ENCODE measurements at regions of chr1 and their contacts with region 1.

Region 1: DNA sequence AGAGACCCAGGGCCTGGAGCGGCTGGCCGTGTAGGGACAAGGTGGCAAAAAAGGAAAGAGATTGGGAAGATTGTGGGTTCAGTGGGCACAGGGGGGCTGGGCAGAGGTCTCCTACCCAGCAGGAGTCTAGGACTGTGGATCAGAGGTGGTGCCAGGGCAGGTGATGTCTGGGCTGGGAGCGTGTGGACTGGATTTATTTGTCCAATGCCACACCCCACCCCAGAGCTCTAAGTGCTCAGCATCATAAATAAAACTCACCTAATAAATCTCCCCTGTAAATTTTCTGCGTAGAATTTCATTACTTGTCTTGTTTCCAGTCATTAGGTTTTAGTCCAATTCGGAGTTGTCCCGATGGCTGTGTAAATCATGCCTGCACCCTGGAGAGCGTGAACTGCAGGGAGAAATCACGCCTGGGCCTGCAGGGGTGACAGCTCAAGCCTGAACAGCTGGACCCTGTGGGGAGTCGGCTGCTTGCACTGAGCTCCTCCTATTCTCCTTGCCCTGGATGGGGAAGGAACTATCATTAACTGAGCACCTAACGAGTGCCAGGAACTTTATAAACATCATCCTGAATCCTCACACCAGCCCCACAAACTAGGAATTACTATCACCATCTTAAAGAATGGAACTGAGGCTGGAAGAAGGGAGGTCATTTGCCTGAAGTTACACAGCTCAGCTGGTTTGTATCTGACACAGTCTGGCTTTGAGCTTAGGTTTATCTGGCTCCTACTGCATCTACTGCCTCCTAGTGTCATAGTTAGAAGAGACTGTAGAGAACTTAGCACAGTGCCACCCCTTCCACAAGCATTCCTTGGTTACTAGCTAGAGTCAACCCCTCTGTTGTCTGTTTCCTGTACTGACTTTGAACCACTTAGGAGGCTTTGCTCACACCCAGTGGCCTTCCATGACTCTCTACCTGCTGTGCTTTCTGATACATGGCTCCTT is 25.0 kb upstream of the POU3F1 start:
- DNase-seq: no peak
- H3K4me3 ChIP-seq: no peak overlapping the region
- H3K27ac ChIP-seq: no peak overlapping the region
- H3K4me1 ChIP-seq: peaks cover 4 to 20% (median 15%) of the 10 kb centered on the region in 4 experiments
- H3K27me3 ChIP-seq: no peaks in the 10 kb centered on the region
- CTCF ChIP-seq: peak in 2 of 3 experiments; percentile 74; a peak in 3 of 4 replicates
- EP300 ChIP-seq: no peak
- POLR2A ChIP-seq: no peak
- RAD21 ChIP-seq: peak; percentile 49 to 67

Region 2: GRCh38 chr1:38037221-38037939 is 34.2 kb before region 1 on chr1:
- CTCF ChIA-PET with region 1: interaction called, 27 read pairs
- POLR2A ChIA-PET with region 1: interaction called, 9 read pairs
- DNase-seq: no peak
- H3K4me3 ChIP-seq: no peak overlapping the region
- H3K27ac ChIP-seq: no peak overlapping the region
- H3K4me1 ChIP-seq: no peaks in the 10 kb centered on the region; a peak in 2 of 7 replicates
- H3K27me3 ChIP-seq: no peaks in the 10 kb centered on the region
- CTCF ChIP-seq: no peak
- EP300 ChIP-seq: no peak
- POLR2A ChIP-seq: no peak
- RAD21 ChIP-seq: peak in 1 of 2 experiments; percentile 37; a peak in 2 of 4 replicates

Region 3: DNA sequence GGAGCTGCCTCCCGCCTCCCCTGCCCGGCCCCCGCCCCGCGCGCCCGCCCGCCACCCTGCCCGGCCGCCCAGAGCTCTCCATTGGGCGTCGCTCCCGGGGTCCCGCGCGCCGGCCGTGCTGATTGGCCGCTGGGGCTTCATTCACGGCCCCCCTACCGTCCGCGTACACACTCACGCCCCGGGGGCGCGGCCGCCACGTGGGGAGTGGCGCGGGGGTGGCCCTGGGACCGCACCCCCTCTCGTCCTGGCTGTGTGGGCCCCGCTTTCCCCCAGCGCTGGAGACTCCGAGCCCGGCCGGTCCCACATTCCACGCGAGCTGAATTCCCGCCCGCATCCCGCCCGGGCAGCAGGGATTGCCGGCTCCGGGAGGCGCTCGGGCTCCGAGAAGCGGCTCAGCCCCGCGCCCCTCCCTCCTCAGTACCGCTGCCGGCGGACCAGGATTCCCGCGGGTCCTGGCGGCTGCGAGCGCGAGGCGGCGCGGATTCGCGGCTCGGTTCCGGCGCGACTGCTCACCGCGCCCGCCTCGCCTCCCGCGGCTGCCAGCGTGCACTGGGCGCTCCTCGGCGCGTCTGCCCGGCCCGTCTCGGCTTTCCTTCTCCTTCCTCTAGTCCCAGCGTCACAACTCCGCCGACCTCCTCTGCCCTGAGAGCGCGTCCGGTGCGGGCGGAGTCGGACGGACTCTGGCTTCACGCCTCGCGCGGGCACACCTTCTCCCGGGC is 24.5 kb before region 1 on chr1:
- CTCF ChIA-PET with region 1: interaction called, 212 read pairs
- POLR2A ChIA-PET with region 1: interaction called, 9 read pairs
- DNase-seq: peak in 1 of 2 experiments; percentile 81
- H3K4me3 ChIP-seq: peak overlapping the region; percentile 48 to 68 (median 56)
- H3K27ac ChIP-seq: no peak overlapping the region
- H3K4me1 ChIP-seq: peaks cover 3 to 18% (median 10%) of the 10 kb centered on the region in 4 experiments
- H3K27me3 ChIP-seq: peaks cover 10 to 48% (median 40%) of the 10 kb centered on the region in 4 experiments; a peak in 6 of 7 replicates
- CTCF ChIP-seq: 0 out of 4 replicates have a peak, but pooled peaks of 1 of the 3 experiments have one; percentile 3
- EP300 ChIP-seq: no peak
- POLR2A ChIP-seq: no peak
- RAD21 ChIP-seq: peak in 1 of 2 experiments; percentile 18; a peak in 2 of 4 replicates

Region 4: GRCh38 chr1:38088366-38088765 is 16.8 kb after region 1 on chr1:
- CTCF ChIA-PET with region 1: interaction called, 39 read pairs
- POLR2A ChIA-PET with region 1: interaction called, 5 read pairs
- DNase-seq: no peak
- H3K4me3 ChIP-seq: no peak overlapping the region
- H3K27ac ChIP-seq: no peak overlapping the region
- H3K4me1 ChIP-seq: peaks cover 8 to 29% (median 19%) of the 10 kb centered on the region in 4 experiments
- H3K27me3 ChIP-seq: no peaks in the 10 kb centered on the region; a peak in 1 of 7 replicates
- CTCF ChIP-seq: no peak
- EP300 ChIP-seq: no peak
- POLR2A ChIP-seq: no peak
- RAD21 ChIP-seq: no peak